WTC11 (cell line): ENCODE measurements at regions of chr10 and their contacts with region 1.

Region 1: GRCh38 chr10:36612436-36612835 is 513.0 kb upstream of the ANKRD30A start:
- DNase-seq: peak; percentile 21
- ATAC-seq: peak; percentile 86
- H3K4me3 Mint-ChIP-seq: no peak overlapping the region
- H3K27ac Mint-ChIP-seq: peak overlapping the region; percentile 51; the same call in 1 of the 2 replicates
- H3K4me1 Mint-ChIP-seq: peaks cover 8% of the 10 kb centered on the region
- H3K27me3 Mint-ChIP-seq: no peaks in the 10 kb centered on the region
- CTCF ChIP-seq: no peak

Region 2: GRCh38 chr10:36666451-36666850 is 54.0 kb after region 1 on chr10:
- CTCF ChIA-PET with region 1: no interaction called
- POLR2A ChIA-PET with region 1: no interaction called
- DNase-seq: no peak
- ATAC-seq: no peak
- H3K4me3 Mint-ChIP-seq: no peak overlapping the region
- H3K27ac Mint-ChIP-seq: no peak overlapping the region
- H3K4me1 Mint-ChIP-seq: no peaks in the 10 kb centered on the region
- H3K27me3 Mint-ChIP-seq: no peaks in the 10 kb centered on the region
- CTCF ChIP-seq: no peak

Region 3: DNA sequence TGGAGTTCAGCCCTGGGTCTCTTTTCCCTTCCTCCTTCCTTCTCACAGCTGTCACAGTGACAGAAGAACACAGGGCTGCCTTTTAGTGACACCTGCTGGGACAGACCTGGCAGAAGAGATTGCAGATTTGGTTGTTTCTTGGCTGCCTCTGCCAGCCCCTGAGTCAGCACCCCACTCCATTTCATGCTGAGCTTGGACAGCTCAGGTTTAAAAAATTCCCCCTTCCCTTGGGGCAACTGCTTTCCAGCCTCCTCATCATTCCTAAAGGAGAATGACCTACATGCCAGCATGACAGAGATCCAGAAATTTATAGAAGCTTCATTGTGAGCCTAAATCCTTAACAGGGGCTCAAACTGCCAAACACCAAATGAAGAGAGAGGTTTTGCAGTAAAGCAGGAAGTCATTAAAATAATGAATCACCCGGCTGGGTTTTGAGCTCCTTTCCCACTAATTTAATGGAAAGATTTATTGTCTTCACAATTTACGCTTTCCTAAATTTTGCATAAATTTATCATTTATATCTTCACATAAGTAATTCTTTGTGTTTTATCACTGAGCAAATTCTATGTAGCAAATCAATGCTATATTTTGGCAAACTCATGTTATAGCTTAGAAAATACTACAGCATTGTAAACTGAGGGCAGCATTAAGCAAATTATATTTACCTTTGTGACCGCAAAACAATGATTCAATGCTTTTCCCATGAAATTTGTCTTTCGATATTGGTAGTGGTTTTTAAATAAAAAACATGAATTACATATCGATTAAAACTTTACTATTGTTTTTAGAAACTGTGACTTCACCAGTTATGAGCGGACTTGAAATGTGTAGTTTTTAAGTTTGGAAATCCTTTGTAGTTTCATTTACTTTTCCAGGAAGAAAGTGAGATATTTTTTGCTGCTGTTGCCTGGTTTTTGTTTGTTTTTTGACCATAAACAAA is 113.4 kb after region 1 on chr10:
- CTCF ChIA-PET with region 1: interaction called, 16 read pairs
- POLR2A ChIA-PET with region 1: no interaction called
- DNase-seq: peak; percentile 64
- ATAC-seq: peak; percentile 99
- H3K4me3 Mint-ChIP-seq: no peak overlapping the region
- H3K27ac Mint-ChIP-seq: peak overlapping the region; percentile 90; the same call in 1 of the 2 replicates
- H3K4me1 Mint-ChIP-seq: peaks cover 18% of the 10 kb centered on the region
- H3K27me3 Mint-ChIP-seq: no peaks in the 10 kb centered on the region
- CTCF ChIP-seq: no peak